PC-9 (cell line): ENCODE measurements at regions of chr12 and their contacts with region 1.

Region 1: DNA sequence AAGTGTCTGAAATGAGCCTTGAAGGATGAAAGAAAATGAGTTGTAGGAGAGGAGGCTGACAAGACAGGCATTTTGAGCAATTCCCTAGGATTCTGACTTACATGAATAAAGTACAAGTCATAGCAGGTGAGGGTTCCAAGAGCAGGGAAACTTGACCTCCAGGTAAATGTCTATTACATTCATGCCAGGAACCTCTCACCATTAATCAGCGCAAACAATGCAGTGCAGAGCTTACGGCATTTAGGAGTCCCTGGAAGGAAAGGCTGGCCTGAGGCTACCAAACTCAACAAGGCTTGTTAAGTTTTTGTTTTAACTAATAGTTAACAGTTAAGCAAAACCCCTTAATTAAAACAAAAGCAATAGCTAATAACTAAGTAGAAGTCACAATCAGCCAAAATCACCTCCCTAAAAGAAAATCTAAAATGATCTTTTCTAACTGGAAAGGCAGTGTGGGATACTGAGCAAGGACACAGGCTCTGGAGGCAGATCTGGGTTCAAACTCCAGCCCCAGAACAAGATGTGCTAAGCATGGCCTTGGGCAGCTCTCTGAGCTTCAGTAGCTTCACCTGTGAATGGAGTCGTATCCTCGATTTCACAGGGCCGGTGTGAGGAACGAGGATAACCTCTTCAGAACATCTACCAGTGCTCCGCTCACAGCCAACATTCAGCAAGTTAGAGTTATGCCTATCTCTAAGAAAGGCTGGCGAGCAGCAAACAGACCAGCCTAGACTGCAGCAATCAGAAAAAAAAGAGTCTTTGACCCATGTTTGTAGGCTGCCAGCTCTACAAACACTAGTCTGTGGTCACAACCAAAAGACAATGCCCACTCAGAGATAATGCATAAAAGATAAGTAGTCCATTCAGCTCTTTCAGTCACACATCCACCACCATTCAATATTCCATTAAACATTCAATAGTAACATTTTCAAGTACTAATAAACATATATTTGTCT is 16.9 kb downstream of the PPTC7 start:
- DNase-seq: peak; percentile 42 to 80
- H3K4me3 ChIP-seq: no peak overlapping the region
- H3K27ac ChIP-seq: peak overlapping the region; percentile 50
- H3K4me1 ChIP-seq: peaks cover 35% of the 10 kb centered on the region
- H3K27me3 ChIP-seq: no peaks in the 10 kb centered on the region
- CTCF ChIP-seq: no peak

Region 2: GRCh38 chr12:110165540-110166159 is 400.5 kb before region 1 on chr12:
- CTCF ChIA-PET with region 1: no interaction called
- POLR2A ChIA-PET with region 1: no interaction called
- intact Hi-C with region 1: no loop called
- DNase-seq: no peak
- H3K4me3 ChIP-seq: no peak overlapping the region
- H3K27ac ChIP-seq: no peak overlapping the region
- H3K4me1 ChIP-seq: no peaks in the 10 kb centered on the region
- H3K27me3 ChIP-seq: no peaks in the 10 kb centered on the region
- CTCF ChIP-seq: no peak

Region 3: GRCh38 chr12:110199339-110200123 is 366.7 kb before region 1 on chr12:
- CTCF ChIA-PET with region 1: no interaction called
- POLR2A ChIA-PET with region 1: no interaction called
- intact Hi-C with region 1: no loop called
- DNase-seq: no peak
- H3K4me3 ChIP-seq: no peak overlapping the region
- H3K27ac ChIP-seq: no peak overlapping the region
- H3K4me1 ChIP-seq: no peaks in the 10 kb centered on the region
- H3K27me3 ChIP-seq: no peaks in the 10 kb centered on the region
- CTCF ChIP-seq: no peak

Region 4: DNA sequence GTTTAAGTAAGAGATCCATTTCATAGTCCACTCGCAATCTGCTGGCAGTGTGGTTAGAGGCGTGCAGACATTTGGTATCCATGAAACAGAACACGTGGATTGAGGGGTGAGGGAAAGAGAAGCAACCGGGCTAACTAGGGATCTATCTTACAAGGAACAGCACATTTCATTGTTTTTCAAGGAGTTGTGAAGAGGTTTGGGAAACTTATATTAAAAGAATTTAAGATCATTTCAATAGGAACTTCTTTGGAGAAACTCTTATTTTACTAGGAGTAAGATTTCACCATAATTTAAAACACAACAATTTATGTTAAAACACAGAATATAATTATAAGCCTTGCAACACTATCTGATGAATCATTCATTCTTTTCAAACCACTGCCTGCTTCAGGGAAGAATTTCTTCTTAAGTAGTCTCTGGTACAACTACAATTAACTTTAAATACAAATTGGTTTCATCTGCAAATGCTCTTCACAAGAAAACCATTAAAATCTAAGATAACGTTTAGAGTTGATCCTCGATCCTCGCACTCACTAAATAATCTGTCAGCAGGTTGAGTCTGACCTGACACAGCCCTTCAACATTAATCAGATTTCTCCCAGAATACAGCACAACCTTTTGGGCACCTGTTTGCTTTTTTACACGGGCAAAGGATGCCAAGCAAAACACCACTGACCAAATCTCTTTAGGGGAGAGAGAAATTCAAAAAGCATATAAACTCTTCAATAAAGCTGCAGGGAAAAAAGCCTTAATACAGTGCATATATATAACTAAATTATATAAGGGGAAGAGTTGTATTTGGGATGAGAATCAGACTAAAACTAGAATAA is 10.4 kb before region 1 on chr12:
- CTCF ChIA-PET with region 1: no interaction called
- POLR2A ChIA-PET with region 1: no interaction called
- intact Hi-C with region 1: loop called (anchors 1 kb)
- DNase-seq: peak in 1 of 2 experiments; percentile 43
- H3K4me3 ChIP-seq: no peak overlapping the region
- H3K27ac ChIP-seq: peak overlapping the region; percentile 58
- H3K4me1 ChIP-seq: peaks cover 24% of the 10 kb centered on the region
- H3K27me3 ChIP-seq: no peaks in the 10 kb centered on the region
- CTCF ChIP-seq: no peak

Region 5: GRCh38 chr12:110577717-110578521 is 11.7 kb after region 1 on chr12:
- CTCF ChIA-PET with region 1: interaction called, 6 read pairs
- POLR2A ChIA-PET with region 1: interaction called, 24 read pairs
- intact Hi-C with region 1: loop called (anchors 1 kb)
- DNase-seq: peak; percentile 40 to 90
- H3K4me3 ChIP-seq: peak overlapping the region; percentile 43; the same call in 1 of the 2 replicates
- H3K27ac ChIP-seq: peak overlapping the region; percentile 98
- H3K4me1 ChIP-seq: peaks cover 71% of the 10 kb centered on the region
- H3K27me3 ChIP-seq: no peaks in the 10 kb centered on the region
- CTCF ChIP-seq: no peak

Region 6: GRCh38 chr12:111170543-111170942 is 604.3 kb after region 1 on chr12:
- CTCF ChIA-PET with region 1: interaction called, 13 read pairs
- POLR2A ChIA-PET with region 1: no interaction called
- intact Hi-C with region 1: no loop called
- DNase-seq: no peak
- H3K4me3 ChIP-seq: no peak overlapping the region
- H3K27ac ChIP-seq: no peak overlapping the region
- H3K4me1 ChIP-seq: no peaks in the 10 kb centered on the region
- H3K27me3 ChIP-seq: peaks cover 100% of the 10 kb centered on the region
- CTCF ChIP-seq: no peak